Endothelial cell of umbilical vein (primary cell): ENCODE measurements at regions of chr21 and their contacts with region 1.

Region 1: DNA sequence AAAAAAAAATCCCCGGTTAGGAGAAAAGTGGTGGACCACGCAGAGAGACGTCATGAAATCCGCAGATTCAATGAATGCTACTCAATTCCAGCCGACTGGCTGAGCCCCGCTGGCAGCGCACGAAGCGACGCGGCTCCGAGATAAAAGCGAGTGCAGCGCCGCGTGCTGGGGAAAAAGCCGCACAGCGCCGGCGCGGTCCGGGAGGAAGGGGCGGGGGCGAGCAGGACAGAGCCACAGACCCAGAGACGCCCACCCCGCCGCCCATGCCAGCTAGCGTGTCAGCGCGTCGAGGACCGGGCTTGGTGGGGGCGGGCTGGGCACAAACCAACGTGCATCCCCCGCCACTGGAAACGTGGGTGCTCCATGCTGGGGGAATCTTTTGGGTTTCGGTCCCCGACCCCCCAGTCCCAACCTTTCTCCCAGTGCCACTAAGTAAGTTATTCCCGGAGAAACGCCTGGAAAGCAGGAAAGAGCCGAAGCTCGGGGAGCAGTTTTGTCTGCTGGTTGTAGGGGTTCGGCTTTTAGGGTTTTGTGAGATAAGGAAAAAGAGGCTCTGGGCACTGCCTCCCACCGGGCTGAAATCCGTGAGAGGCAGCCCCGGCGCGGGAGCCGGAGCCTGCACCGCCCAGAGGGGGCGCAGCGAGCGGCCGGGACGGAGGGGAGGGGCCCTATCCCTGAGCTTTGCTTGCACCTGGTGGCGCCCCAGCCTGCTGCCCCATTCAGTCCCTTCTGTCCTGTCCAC is at the start of gene KCNJ6:
- DNase-seq: peak; percentile 47
- H3K4me3 ChIP-seq: peak within 1 kb of the TSS in 1 of 3 experiments; percentile 20
- H3K27ac ChIP-seq: no peak within 1 kb of the TSS
- H3K4me1 ChIP-seq: no peaks in the 10 kb centered on the region
- H3K27me3 ChIP-seq: peaks cover 34 to 47% of the 10 kb centered on the region in 2 experiments
- CTCF ChIP-seq: peak; percentile 51 to 77
- POLR2A ChIP-seq: no peak
- total RNA-seq, gene KCNJ6: not detected in 2 replicates

Region 2: DNA sequence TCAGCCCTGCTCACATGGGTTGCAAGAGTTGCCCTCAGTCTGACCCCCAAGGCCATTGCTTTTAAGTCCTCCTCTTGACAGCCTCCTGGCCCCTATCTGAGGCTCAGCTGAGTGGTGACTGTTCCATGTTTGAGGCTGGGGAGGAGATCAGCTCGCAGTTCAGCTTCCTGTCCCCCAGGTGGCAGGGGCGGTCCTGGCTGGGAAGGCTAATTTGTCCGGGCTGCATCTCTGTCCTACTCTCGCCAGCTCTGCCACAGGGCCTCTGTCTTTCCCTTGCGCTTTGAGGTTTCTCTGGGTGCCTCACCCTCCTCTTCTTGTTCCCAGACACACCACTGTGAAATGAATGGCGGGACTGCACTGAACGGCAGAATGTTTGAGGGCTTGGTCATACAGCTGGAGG is 157.5 kb before region 1 on chr21:
- CTCF ChIA-PET with region 1: no interaction called
- POLR2A ChIA-PET with region 1: no interaction called
- dilution Hi-C with region 1: no loop called
- intact Hi-C with region 1: loop called (anchors 1 kb)
- DNase-seq: peak; percentile 6
- H3K4me3 ChIP-seq: no peak overlapping the region
- H3K27ac ChIP-seq: no peak overlapping the region
- H3K4me1 ChIP-seq: no peaks in the 10 kb centered on the region
- H3K27me3 ChIP-seq: peaks cover 0 to 6% of the 10 kb centered on the region in 2 experiments
- CTCF ChIP-seq: peak; percentile 23 to 44
- POLR2A ChIP-seq: no peak

Region 3: DNA sequence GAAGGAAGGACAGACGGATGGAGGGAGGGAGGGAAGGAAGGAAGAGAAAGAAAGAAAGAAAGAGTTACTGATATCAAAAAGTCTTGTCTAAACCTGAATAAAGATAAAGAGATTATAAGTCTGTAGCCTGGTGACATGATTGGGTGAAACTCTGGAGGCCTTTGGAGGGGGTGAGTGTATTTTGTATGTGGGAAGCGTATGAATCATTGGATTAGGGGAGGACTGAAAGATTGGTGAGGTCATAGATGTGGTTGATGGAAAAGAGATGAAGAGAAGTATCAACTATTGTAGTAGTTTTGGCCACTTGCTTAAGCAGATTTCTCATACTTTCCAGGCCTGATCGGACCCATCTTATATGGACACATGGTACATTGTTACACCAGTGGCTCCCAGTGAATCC is 11.2 kb after region 1 on chr21:
- CTCF ChIA-PET with region 1: no interaction called
- POLR2A ChIA-PET with region 1: no interaction called
- dilution Hi-C with region 1: no loop called
- intact Hi-C with region 1: no loop called
- DNase-seq: no peak
- H3K4me3 ChIP-seq: no peak overlapping the region
- H3K27ac ChIP-seq: no peak overlapping the region
- H3K4me1 ChIP-seq: no peaks in the 10 kb centered on the region
- H3K27me3 ChIP-seq: peaks cover 0 to 3% of the 10 kb centered on the region in 2 experiments
- CTCF ChIP-seq: no peak
- POLR2A ChIP-seq: no peak